ENCODE measurements at regions of chr9 and their contacts with region 1.

Region 1: DNA sequence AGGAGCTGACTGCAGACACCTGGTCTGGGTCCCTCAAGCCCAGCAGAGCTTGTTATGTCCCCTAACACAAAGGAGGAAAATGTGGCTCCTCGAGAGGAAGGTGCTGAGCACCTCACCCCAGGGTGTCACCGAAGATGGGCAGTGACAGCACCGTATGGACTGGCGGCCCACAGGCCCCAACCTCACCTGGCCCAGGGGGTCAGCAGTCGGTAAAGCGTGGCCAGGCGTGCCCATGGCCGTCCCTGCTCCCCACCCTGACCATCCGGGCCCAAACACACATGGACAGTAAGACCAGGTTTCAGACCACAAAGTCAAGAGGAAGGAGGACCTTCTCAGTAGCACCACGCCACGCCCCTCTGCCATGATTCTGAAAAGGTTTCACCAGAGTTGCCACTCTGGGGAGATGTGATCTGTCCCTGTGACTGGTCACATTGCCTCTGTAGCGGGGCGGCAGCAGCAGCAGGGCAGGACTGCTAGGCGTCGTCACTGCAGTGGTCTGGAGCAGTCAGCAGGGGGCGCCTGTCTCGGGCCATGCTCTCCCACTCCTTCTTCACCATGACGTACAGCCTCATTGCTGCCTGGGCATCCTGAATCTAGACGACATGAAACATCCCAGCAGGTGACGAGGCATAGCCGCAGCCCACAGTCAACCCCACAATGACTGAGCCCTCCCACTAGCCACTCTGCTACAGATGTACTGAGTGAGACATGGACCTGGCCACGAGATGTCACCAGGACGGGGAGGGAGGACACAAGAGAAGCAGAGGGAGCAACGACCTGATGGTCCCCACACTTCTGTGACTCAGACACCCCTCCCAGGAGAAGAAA is 11.1 kb downstream of the REXO4 start:
- DNase-seq: peak; percentile 55
- H3K4me3 ChIP-seq: no peak overlapping the region
- H3K27ac ChIP-seq: no peak overlapping the region
- H3K4me1 ChIP-seq: no peaks in the 10 kb centered on the region
- H3K27me3 ChIP-seq: no peaks in the 10 kb centered on the region
- CTCF ChIP-seq: peak; percentile 83 to 91 (median 88)
- POLR2A ChIP-seq: no peak

Region 2: DNA sequence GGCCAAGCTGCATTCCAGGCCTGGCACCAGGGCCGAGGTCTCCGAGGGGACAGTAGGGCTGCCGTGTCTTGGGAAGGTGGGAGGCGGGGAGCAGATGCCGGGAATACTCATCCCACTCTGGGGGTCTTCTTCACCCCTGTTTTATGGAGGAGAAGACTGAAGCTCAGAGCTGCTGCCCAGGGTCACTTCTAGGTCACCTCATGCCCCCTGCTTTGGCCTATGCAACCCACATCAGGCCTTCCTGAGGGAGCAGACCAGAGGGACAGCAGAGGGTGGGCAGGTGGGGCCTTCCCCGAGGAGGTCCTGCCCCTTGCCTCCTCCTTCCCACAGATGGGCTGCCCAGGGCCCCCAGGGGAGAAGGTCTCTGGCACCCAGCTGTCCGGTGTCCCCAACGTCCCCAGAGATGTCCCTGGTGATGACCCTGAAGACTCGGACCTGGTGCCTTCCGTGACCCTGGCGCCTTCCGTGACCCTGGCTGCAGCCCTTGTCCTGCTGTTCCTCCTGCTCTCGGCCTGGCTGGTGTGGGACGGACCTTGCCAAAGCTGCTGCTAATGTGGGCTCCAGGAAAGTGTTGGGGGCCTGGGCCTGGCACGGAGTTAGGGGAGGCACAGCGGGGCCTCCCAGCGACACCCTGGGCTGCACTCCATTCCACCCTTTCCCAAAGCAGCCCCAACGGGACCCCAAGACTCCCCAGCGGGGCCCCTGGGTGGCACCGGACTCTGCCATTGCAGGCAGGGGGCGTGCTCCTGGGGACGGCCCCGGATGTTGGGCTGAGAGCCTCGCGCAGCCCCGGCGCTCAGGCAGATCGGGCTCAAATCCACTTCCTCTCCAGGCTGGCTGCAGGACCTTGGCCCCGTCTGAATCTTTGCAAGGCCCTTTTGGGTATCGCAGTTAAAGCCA is 78.9 kb after region 1 on chr9:
- intact Hi-C with region 1: loop called (anchors 1 kb)
- DNase-seq: no peak
- H3K4me3 ChIP-seq: no peak overlapping the region
- H3K27ac ChIP-seq: no peak overlapping the region
- H3K4me1 ChIP-seq: peaks cover 6% of the 10 kb centered on the region
- H3K27me3 ChIP-seq: no peaks in the 10 kb centered on the region
- CTCF ChIP-seq: no peak
- POLR2A ChIP-seq: no peak

Region 3: DNA sequence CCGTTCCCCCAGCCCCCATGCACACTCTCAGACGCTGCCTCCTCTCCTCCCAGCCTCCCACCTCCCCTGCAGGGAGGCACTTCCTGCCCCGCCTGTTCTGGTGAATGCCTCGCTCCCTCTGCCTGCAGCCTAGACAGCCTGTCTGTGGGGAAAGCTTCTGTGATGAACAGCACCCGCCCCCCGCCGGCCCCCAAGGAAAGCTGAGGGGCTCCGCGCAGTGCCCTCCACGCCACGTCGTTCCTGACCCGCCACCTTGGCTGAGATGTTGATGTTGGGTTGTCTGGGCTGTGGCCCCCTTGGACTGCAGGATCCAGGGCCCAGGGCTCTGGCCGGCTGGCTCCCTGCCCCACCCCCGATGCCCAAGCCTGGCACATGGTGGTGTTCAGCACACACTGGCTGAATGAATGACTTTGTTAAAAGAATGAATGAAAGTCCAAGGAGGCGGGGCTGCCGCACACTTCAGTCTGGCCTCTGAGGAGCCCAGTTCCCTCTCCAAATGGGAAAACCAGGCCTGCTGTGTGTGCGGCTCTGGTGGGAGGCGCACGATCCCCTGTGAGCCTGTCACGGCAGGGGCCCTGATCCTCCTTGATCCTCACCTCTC is 120.1 kb after region 1 on chr9:
- intact Hi-C with region 1: no loop called
- DNase-seq: no peak
- H3K4me3 ChIP-seq: no peak overlapping the region
- H3K27ac ChIP-seq: no peak overlapping the region
- H3K4me1 ChIP-seq: peaks cover 6% of the 10 kb centered on the region
- H3K27me3 ChIP-seq: peaks cover 5% of the 10 kb centered on the region
- CTCF ChIP-seq: no peak
- POLR2A ChIP-seq: no peak